K562 (cell line): ENCODE measurements at regions of chr5 and their contacts with region 1.

Region 1: GRCh38 chr5:149367249-149367971 is 9.6 kb downstream of the PCYOX1L start:
- DNase-seq: peak; percentile 74 to 90 (median 81)
- ATAC-seq: peak; percentile 90
- H3K4me3 ChIP-seq: no peak overlapping the region
- H3K27ac ChIP-seq: no peak overlapping the region
- H3K4me1 ChIP-seq: peaks cover 23 to 25% of the 10 kb centered on the region in 2 experiments; a peak in 4 of 5 replicates
- H3K27me3 ChIP-seq: no peaks in the 10 kb centered on the region
- CTCF ChIP-seq: peak; percentile 96 to 97 (median 96)
- EP300 ChIP-seq: no peak
- POLR2A ChIP-seq: no peak
- RAD21 ChIP-seq: peak; percentile 62 to 85

Region 2: GRCh38 chr5:149141224-149141956 is 226.0 kb before region 1 on chr5 and contains the start of gene ABLIM3:
- CTCF ChIA-PET with region 1: no interaction called
- POLR2A ChIA-PET with region 1: no interaction called
- in situ Hi-C with region 1: no loop called
- intact Hi-C with region 1: loop called (anchors 5 kb)
- DNase-seq: peak; percentile 72 to 93 (median 90)
- ATAC-seq: peak; percentile 99
- H3K4me3 ChIP-seq: peak within 1 kb of the TSS; percentile 45
- H3K27ac ChIP-seq: no peak within 1 kb of the TSS
- H3K4me1 ChIP-seq: peaks cover 0 to 11% of the 10 kb centered on the region in 2 experiments; a peak in 2 of 5 replicates
- H3K27me3 ChIP-seq: peaks cover 2 to 16% of the 10 kb centered on the region in 2 experiments; a peak in 2 of 5 replicates
- CTCF ChIP-seq: peak; percentile 86 to 94 (median 92)
- EP300 ChIP-seq: no peak
- POLR2A ChIP-seq: no peak
- RAD21 ChIP-seq: peak; percentile 83 to 85
- polyA plus RNA-seq, gene ABLIM3: 0.08 to 0.10 TPM

Region 3: GRCh38 chr5:149268928-149269557 is 98.4 kb before region 1 on chr5:
- CTCF ChIA-PET with region 1: interaction called, 3 read pairs
- POLR2A ChIA-PET with region 1: no interaction called
- in situ Hi-C with region 1: no loop called
- intact Hi-C with region 1: loop called (anchors 2 kb)
- DNase-seq: peak; percentile 69 to 77 (median 74)
- ATAC-seq: peak; percentile 82
- H3K4me3 ChIP-seq: no peak overlapping the region
- H3K27ac ChIP-seq: no peak overlapping the region
- H3K4me1 ChIP-seq: peaks cover 0 to 12% of the 10 kb centered on the region in 2 experiments; a peak in 2 of 5 replicates
- H3K27me3 ChIP-seq: peaks cover 12 to 48% of the 10 kb centered on the region in 2 experiments; a peak in 3 of 5 replicates
- CTCF ChIP-seq: peak; percentile 62 to 83 (median 72); a peak in 5 of 6 replicates
- EP300 ChIP-seq: no peak
- POLR2A ChIP-seq: no peak
- RAD21 ChIP-seq: peak; percentile 81 to 85

Region 4: GRCh38 chr5:149317281-149318048 is 49.9 kb before region 1 on chr5:
- CTCF ChIA-PET with region 1: interaction called, 36 read pairs
- POLR2A ChIA-PET with region 1: interaction called, 4 read pairs
- in situ Hi-C with region 1: loop called (anchors 5 kb)
- intact Hi-C with region 1: loop called (anchors 1 kb)
- DNase-seq: peak; percentile 61 to 73 (median 68)
- ATAC-seq: peak; percentile 46
- H3K4me3 ChIP-seq: no peak overlapping the region
- H3K27ac ChIP-seq: no peak overlapping the region; the same call in 2 of the 3 replicates
- H3K4me1 ChIP-seq: peaks cover 27 to 28% of the 10 kb centered on the region in 2 experiments
- H3K27me3 ChIP-seq: peaks cover 5% of the 10 kb centered on the region in 2 experiments
- CTCF ChIP-seq: peak; percentile 64 to 92 (median 79); a peak in 5 of 6 replicates
- EP300 ChIP-seq: no peak
- POLR2A ChIP-seq: no peak
- RAD21 ChIP-seq: peak; percentile 83 to 93

Region 5: GRCh38 chr5:149434162-149435014 is 67.0 kb after region 1 on chr5:
- CTCF ChIA-PET with region 1: interaction called, 9 read pairs
- POLR2A ChIA-PET with region 1: no interaction called
- in situ Hi-C with region 1: no loop called
- intact Hi-C with region 1: loop called (anchors 5 kb)
- DNase-seq: peak; percentile 76 to 84 (median 81)
- ATAC-seq: peak; percentile 32; the same call in 2 of the 3 replicates
- H3K4me3 ChIP-seq: no peak overlapping the region
- H3K27ac ChIP-seq: no peak overlapping the region
- H3K4me1 ChIP-seq: peaks cover 8 to 27% of the 10 kb centered on the region in 2 experiments
- H3K27me3 ChIP-seq: no peaks in the 10 kb centered on the region
- CTCF ChIP-seq: peak; percentile 81 to 93 (median 91)
- EP300 ChIP-seq: no peak
- POLR2A ChIP-seq: no peak
- RAD21 ChIP-seq: peak; percentile 76 to 84

Region 6: DNA sequence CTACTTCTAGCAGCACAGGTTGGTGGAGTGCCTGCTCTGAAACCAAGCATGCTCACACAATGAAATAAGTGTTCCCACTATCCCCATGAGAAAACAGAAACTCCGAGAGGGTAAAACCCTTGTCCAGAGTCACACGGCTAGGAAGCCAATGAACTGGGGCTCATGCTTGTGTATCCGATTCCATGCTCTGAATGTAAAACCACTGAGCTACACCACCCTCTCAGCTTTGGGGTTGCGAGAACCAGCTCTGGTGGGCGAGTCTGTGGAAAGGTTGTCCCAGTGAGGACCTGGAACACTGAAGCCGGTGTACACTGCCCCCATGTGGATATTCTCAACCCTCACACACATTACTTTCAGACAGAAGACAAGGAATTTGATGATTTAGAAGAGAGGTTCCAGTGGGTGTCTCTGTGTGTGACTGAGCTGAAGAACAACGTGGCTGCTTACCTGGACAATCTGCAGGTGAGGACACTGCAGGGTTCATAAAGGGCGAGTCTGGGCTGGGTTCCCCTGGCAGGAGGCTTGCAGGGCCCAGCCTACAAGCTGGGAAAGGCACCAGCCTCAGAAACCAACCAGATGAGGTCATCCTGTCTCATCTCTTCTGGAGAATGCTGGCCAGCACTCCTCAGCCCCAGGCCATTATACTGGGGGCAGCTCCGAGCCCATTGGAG is 251.3 kb after region 1 on chr5:
- CTCF ChIA-PET with region 1: no interaction called
- POLR2A ChIA-PET with region 1: interaction called, 3 read pairs
- in situ Hi-C with region 1: no loop called
- intact Hi-C with region 1: loop called (anchors 1 kb)
- DNase-seq: peak; percentile 71 to 80 (median 78)
- ATAC-seq: peak; percentile 96
- H3K4me3 ChIP-seq: no peak overlapping the region
- H3K27ac ChIP-seq: no peak overlapping the region
- H3K4me1 ChIP-seq: peaks cover 0 to 9% of the 10 kb centered on the region in 2 experiments; a peak in 4 of 5 replicates
- H3K27me3 ChIP-seq: no peaks in the 10 kb centered on the region
- CTCF ChIP-seq: peak; percentile 78 to 88 (median 88)
- EP300 ChIP-seq: no peak
- POLR2A ChIP-seq: no peak
- RAD21 ChIP-seq: peak; percentile 86 to 88